Caco-2 (cell line): ENCODE measurements at regions of chr10 and their contacts with region 1.

Region 1: GRCh38 chr10:58952747-58953466 is 223.5 kb upstream of the PHYHIPL start:
- DNase-seq: peak; percentile 67 to 84
- H3K4me3 ChIP-seq: no peak overlapping the region
- H3K4me3 Mint-ChIP-seq: no peak overlapping the region
- H3K27ac Mint-ChIP-seq: peak overlapping the region; percentile 24
- H3K4me1 ChIP-seq: peaks cover 22% of the 10 kb centered on the region
- H3K4me1 Mint-ChIP-seq: peaks cover 23% of the 10 kb centered on the region
- H3K27me3 ChIP-seq: no peaks in the 10 kb centered on the region
- H3K27me3 Mint-ChIP-seq: no peaks in the 10 kb centered on the region
- CTCF ChIP-seq: peak; percentile 92 to 97

Region 2: DNA sequence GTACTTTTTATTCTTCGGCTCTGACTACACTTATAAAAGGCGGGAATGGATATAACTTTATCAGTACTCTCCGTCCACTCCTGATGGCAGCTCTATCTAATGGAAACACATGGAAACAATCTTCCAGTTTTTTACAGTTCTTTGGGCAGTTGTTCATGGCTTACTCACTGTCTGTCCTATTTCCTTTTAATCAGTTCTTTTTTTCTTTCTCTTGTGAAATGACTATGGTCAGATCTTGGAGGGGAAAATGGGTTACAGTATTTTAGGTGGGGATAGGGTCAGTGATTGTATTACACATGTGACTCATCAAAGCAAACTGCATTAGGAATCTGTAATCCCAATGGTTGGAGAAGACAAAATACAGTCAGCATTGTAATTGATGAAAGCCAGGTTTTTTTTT is 327.8 kb before region 1 on chr10:
- CTCF ChIA-PET with region 1: no interaction called
- POLR2A ChIA-PET with region 1: no interaction called
- intact Hi-C with region 1: no loop called
- DNase-seq: no peak
- H3K4me3 ChIP-seq: no peak overlapping the region
- H3K4me3 Mint-ChIP-seq: no peak overlapping the region
- H3K27ac Mint-ChIP-seq: no peak overlapping the region
- H3K4me1 ChIP-seq: no peaks in the 10 kb centered on the region
- H3K4me1 Mint-ChIP-seq: peaks cover 13% of the 10 kb centered on the region
- H3K27me3 ChIP-seq: no peaks in the 10 kb centered on the region
- H3K27me3 Mint-ChIP-seq: no peaks in the 10 kb centered on the region
- CTCF ChIP-seq: no peak

Region 3: DNA sequence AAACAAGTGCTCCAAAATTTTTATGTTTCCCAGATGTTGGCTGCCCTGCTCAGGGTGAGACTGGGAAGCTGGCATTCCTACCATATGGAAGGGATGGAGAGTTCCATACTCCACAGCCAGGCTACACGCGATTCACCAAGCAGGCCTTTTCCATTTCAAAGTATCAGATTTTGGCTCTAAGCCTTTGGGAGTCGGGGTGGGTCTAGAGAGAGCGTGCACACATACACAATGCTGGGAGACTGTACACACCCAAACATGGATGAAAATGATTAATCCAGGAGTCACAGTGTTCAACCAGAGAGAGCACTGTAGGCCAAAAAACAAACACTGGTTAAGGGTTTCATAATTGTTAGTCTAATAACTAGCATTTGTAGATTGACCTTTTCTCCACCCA is 145.3 kb before region 1 on chr10:
- CTCF ChIA-PET with region 1: interaction called, 5 read pairs
- POLR2A ChIA-PET with region 1: no interaction called
- intact Hi-C with region 1: loop called (anchors 1 kb)
- DNase-seq: peak; percentile 54 to 69
- H3K4me3 ChIP-seq: no peak overlapping the region
- H3K4me3 Mint-ChIP-seq: no peak overlapping the region
- H3K27ac Mint-ChIP-seq: peak overlapping the region; percentile 85
- H3K4me1 ChIP-seq: peaks cover 66% of the 10 kb centered on the region
- H3K4me1 Mint-ChIP-seq: peaks cover 45% of the 10 kb centered on the region
- H3K27me3 ChIP-seq: no peaks in the 10 kb centered on the region
- H3K27me3 Mint-ChIP-seq: no peaks in the 10 kb centered on the region
- CTCF ChIP-seq: no peak

Region 4: GRCh38 chr10:59057345-59057744 is 104.4 kb after region 1 on chr10:
- CTCF ChIA-PET with region 1: no interaction called
- POLR2A ChIA-PET with region 1: no interaction called
- intact Hi-C with region 1: loop called (anchors 5 kb)
- DNase-seq: no peak
- H3K4me3 ChIP-seq: no peak overlapping the region
- H3K4me3 Mint-ChIP-seq: no peak overlapping the region
- H3K27ac Mint-ChIP-seq: no peak overlapping the region
- H3K4me1 ChIP-seq: no peaks in the 10 kb centered on the region; the same call in 1 of the 2 replicates
- H3K4me1 Mint-ChIP-seq: peaks cover 12% of the 10 kb centered on the region
- H3K27me3 ChIP-seq: no peaks in the 10 kb centered on the region
- H3K27me3 Mint-ChIP-seq: no peaks in the 10 kb centered on the region
- CTCF ChIP-seq: no peak

Region 5: GRCh38 chr10:59181668-59182067 is 228.8 kb after region 1 on chr10:
- CTCF ChIA-PET with region 1: interaction called, 15 read pairs
- POLR2A ChIA-PET with region 1: no interaction called
- intact Hi-C with region 1: loop called (anchors 1 kb)
- DNase-seq: peak; percentile 51 to 78
- H3K4me3 ChIP-seq: no peak overlapping the region
- H3K4me3 Mint-ChIP-seq: no peak overlapping the region
- H3K27ac Mint-ChIP-seq: no peak overlapping the region
- H3K4me1 ChIP-seq: peaks cover 4% of the 10 kb centered on the region; the same call in 1 of the 2 replicates
- H3K4me1 Mint-ChIP-seq: peaks cover 7% of the 10 kb centered on the region
- H3K27me3 ChIP-seq: no peaks in the 10 kb centered on the region
- H3K27me3 Mint-ChIP-seq: no peaks in the 10 kb centered on the region
- CTCF ChIP-seq: peak; percentile 87 to 89

Region 6: DNA sequence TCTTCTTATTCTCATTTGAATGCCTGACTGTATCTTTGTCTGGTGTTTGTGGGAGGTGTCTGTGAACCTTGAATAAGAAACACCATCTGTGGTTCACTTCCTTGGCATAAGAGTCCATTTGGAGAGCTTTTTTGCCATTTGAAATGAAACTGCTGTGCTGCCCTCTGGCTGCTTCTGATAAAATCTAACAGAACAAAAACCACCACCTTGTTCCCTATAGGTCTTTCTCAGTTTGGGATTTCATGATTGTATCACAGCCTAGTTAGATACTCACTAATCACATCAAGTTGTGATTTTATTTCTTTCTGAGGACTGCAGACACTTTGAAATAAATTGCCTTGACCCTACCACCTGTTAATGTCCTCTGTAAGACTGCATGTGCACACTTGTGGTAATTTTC is 512.2 kb after region 1 on chr10:
- CTCF ChIA-PET with region 1: no interaction called
- POLR2A ChIA-PET with region 1: no interaction called
- intact Hi-C with region 1: loop called (anchors 1 kb)
- DNase-seq: peak in 1 of 2 experiments; percentile 29
- H3K4me3 ChIP-seq: no peak overlapping the region
- H3K4me3 Mint-ChIP-seq: no peak overlapping the region
- H3K27ac Mint-ChIP-seq: no peak overlapping the region
- H3K4me1 ChIP-seq: no peaks in the 10 kb centered on the region
- H3K4me1 Mint-ChIP-seq: no peaks in the 10 kb centered on the region
- H3K27me3 ChIP-seq: no peaks in the 10 kb centered on the region; the same call in 1 of the 2 replicates
- H3K27me3 Mint-ChIP-seq: peaks cover 10% of the 10 kb centered on the region
- CTCF ChIP-seq: peak; percentile 25 to 57